ENCODE measurements at regions of chr16 and their contacts with region 1.

Region 1: DNA sequence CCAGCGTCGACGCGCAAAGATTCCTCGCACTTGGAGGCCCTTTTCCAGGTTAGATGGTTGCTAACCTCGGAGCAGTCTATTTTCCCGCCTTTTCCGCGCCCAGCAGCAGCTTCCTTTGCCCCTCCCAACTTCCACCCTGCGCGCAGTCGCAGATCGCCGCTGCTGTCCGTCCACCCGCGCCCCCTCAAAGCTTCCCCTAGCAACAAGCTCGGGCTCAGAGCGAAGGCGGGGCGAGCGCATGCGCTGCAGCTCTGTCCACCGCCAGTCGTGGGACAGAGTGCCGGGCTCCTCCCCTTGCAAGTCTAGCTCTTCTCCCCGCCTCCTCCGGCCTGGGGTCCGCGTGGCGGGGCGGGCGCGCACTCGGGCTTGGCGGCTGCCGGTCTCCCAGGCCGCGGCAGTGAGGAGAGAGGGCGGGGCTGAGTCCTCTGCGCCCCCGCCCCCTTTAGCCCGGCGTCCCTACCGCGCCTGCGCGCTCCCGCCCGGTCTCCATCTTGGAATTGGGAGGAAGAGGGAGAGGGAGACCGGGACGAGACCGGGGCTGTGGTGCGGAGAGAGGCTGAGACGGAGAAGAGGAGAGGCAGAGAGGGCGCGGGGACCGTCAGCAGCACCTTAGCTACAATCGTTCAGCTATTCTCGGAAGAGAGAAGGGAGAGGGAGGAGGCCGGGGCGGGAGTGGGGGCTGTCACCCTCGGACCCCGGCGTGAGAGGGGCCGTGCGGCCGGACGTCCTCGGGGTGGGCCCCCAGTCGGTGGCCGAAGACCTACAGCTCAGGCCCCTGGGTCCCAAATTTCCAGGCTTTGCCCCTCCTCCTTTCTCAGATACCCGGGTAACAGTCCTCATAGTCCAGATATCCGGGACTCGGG is at the start of gene TAOK2:
- DNase-seq: peak; percentile 98
- ATAC-seq: peak; percentile 98
- H3K4me3 Mint-ChIP-seq: peak within 1 kb of the TSS; percentile 87
- H3K27ac Mint-ChIP-seq: peak within 1 kb of the TSS; percentile 86
- H3K4me1 Mint-ChIP-seq: peaks cover 31% of the 10 kb centered on the region
- H3K27me3 Mint-ChIP-seq: no peaks in the 10 kb centered on the region
- total RNA-seq, gene TAOK2: 24.1 to 24.4 TPM

Region 2: DNA sequence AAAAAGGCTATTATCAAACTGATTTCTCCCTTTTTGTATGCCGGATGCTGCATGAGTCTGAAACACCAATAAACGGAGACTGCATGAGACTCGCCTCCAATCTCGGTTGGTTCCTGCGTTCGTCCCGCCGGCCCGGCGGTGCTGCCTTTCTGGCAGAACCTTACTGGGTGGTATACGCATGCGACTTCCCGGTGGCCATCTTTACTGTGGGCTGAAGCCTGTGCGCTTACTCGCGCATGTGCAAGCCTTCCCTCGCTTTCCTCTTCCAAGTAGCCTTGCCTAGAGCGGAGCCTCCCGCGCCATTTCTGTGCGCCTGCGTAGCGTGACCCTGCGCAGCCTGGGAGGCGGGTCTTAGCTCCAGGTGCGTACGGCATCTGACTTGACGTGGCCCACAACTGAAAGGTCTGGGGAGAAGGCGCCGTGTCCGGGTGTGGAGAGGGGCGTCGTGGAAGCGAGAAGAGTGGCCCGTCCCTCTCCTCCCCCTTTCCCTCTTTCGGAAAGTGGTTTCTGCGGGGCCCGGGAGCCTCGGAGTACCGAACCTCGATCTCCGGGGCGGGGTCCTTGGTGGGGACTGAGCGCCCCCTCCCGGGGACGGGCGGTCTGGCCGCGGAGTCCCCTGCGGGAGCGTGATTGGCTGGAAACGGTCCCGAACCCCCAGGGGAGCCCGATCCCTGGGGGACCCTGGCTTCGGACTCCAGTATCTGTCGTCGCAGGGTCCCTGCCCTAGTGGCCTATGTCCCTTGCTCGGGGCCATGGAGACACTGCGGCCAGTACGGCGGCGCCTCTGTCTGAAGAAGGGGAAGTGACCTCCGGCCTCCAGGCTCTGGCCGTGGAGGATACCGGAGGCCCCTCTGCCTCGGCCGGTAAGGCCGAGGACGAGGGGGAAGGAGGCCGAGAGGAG is 157.6 kb before region 1 on chr16 and contains the start of gene PAGR1:
- CTCF ChIA-PET with region 1: interaction called, 7 read pairs
- POLR2A ChIA-PET with region 1: no interaction called
- intact Hi-C with region 1: loop called in 1 of 2 experiments (anchors 1 kb)
- DNase-seq: peak; percentile 99
- ATAC-seq: peak; percentile 72
- H3K4me3 Mint-ChIP-seq: peak within 1 kb of the TSS; percentile 84
- H3K27ac Mint-ChIP-seq: peak within 1 kb of the TSS; percentile 97
- H3K4me1 Mint-ChIP-seq: peaks cover 57% of the 10 kb centered on the region
- H3K27me3 Mint-ChIP-seq: no peaks in the 10 kb centered on the region
- total RNA-seq, gene PAGR1: 20.6 to 25.6 TPM

Region 3: GRCh38 chr16:29831490-29831889 is 142.1 kb before region 1 on chr16:
- CTCF ChIA-PET with region 1: no interaction called
- POLR2A ChIA-PET with region 1: no interaction called
- intact Hi-C with region 1: no loop called
- DNase-seq: no peak
- ATAC-seq: no peak
- H3K4me3 Mint-ChIP-seq: no peak overlapping the region
- H3K27ac Mint-ChIP-seq: no peak overlapping the region
- H3K4me1 Mint-ChIP-seq: peaks cover 37% of the 10 kb centered on the region
- H3K27me3 Mint-ChIP-seq: no peaks in the 10 kb centered on the region

Region 4: DNA sequence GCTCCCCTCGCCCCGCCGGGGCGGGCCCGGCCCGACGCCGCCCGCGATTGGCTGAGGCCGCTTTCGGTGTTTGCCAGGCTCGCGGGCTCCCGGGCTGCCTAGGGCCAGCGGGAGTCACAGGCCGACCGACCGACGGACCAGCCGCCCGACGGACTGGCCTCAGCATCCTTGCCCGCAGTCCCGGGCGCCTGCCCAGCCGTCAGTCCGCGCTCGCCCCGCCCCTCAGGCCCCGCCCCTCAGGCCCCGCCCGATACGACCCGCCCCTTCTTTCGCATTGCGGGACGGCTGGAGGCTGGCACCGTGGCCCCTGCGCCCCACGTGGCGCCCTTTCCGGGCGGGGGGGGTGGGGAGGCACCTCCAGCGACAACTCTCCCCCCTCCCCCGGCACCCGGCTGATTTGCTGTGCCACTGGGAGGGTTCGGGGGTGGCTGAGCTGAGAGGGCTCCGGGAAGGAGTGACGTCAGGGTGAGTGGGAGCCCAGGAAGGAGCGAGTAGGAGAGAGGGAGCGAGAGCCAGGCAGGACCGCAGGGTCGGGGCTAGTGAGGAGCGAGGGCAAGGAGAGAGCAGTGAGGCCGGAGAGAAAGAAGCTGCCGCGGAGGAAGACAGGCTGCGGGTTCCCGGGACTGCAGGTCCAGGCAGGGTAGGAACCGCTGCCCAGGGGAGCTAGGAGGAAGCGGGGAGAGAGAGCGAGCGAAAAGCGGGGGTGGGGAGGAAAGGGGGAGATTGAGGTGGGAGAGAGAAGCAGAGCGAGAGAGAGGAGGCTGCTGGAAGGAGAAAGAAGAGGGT is 73.3 kb before region 1 on chr16 and contains the start of gene ASPHD1:
- CTCF ChIA-PET with region 1: interaction called, 3 read pairs
- POLR2A ChIA-PET with region 1: interaction called, 4 read pairs
- intact Hi-C with region 1: loop called in 1 of 2 experiments (anchors 1 kb)
- DNase-seq: peak; percentile 84
- ATAC-seq: peak; percentile 92
- H3K4me3 Mint-ChIP-seq: peak within 1 kb of the TSS; percentile 74
- H3K27ac Mint-ChIP-seq: peak within 1 kb of the TSS; percentile 38
- H3K4me1 Mint-ChIP-seq: peaks cover 13% of the 10 kb centered on the region
- H3K27me3 Mint-ChIP-seq: peaks cover 21% of the 10 kb centered on the region
- total RNA-seq, gene ASPHD1: 2.7 to 3.2 TPM

Region 5: GRCh38 chr16:29943846-29944669 is 29.6 kb before region 1 on chr16:
- CTCF ChIA-PET with region 1: no interaction called
- POLR2A ChIA-PET with region 1: no interaction called
- intact Hi-C with region 1: no loop called
- DNase-seq: no peak
- ATAC-seq: no peak
- H3K4me3 Mint-ChIP-seq: no peak overlapping the region
- H3K27ac Mint-ChIP-seq: no peak overlapping the region
- H3K4me1 Mint-ChIP-seq: peaks cover 2% of the 10 kb centered on the region
- H3K27me3 Mint-ChIP-seq: peaks cover 3% of the 10 kb centered on the region

Region 6: GRCh38 chr16:29961479-29962343 is 11.9 kb before region 1 on chr16 and contains the start of gene TMEM219:
- CTCF ChIA-PET with region 1: interaction called, 15 read pairs
- POLR2A ChIA-PET with region 1: interaction called, 14 read pairs
- intact Hi-C with region 1: loop called (anchors 1 kb)
- DNase-seq: peak; percentile 94
- ATAC-seq: peak; percentile 95
- H3K4me3 Mint-ChIP-seq: peak within 1 kb of the TSS; percentile 88
- H3K27ac Mint-ChIP-seq: peak within 1 kb of the TSS; percentile 87
- H3K4me1 Mint-ChIP-seq: peaks cover 17% of the 10 kb centered on the region
- H3K27me3 Mint-ChIP-seq: no peaks in the 10 kb centered on the region
- total RNA-seq, gene TMEM219: 34.6 to 42.5 TPM

Region 7: DNA sequence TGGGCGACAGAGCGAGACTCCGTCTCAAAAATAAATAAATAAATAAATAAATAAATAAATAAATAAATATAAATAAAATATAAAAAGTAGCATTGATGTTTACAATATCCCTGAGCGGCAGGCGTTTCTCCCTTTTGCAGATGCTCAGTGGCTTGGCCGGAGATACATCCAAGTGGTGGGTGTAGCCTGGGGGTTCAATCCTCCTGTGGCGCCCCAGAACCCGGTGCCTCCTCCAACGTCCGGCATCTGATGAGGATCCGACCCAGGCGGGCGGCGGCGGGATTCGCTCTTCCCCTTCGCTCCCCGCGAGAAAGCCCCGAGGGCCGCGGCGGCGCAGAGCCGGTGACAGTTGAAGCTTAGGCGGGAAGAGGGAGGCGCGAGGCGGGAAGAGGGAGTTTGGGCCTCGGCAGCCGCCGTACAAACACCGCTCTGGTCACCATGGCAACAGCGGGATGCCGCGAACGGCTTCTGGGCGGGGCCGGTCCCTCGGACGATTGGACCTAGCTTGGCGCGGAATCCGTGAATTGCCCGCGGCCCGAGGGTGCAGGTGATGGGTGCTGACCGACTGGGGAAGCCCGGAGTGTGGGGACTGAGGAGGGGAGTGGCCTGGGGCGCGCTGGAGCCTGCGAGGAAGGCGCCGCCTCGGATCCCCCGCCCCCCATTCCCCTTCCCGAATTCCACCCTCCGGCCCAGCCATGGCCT is 79.2 kb after region 1 on chr16:
- CTCF ChIA-PET with region 1: interaction called, 3 read pairs
- POLR2A ChIA-PET with region 1: interaction called, 5 read pairs
- intact Hi-C with region 1: loop called in 1 of 2 experiments (anchors 1 kb)
- DNase-seq: peak; percentile 95
- ATAC-seq: peak; percentile 69
- H3K4me3 Mint-ChIP-seq: peak overlapping the region; percentile 78
- H3K27ac Mint-ChIP-seq: peak overlapping the region; percentile 72
- H3K4me1 Mint-ChIP-seq: peaks cover 25% of the 10 kb centered on the region
- H3K27me3 Mint-ChIP-seq: peaks cover 2% of the 10 kb centered on the region